ENCODE measurements at regions of chr18 and their contacts with region 1.

Region 1: GRCh38 chr18:79458131-79458838 is 62.6 kb downstream of the NFATC1 start:
- DNase-seq: peak; percentile 89 to 94 (median 90)
- ATAC-seq: peak; percentile 89 to 90
- H3K4me3 ChIP-seq: no peak overlapping the region
- H3K27ac ChIP-seq: peak overlapping the region; percentile 59
- H3K4me1 ChIP-seq: peaks cover 8% of the 10 kb centered on the region
- H3K27me3 ChIP-seq: no peaks in the 10 kb centered on the region

Region 2: DNA sequence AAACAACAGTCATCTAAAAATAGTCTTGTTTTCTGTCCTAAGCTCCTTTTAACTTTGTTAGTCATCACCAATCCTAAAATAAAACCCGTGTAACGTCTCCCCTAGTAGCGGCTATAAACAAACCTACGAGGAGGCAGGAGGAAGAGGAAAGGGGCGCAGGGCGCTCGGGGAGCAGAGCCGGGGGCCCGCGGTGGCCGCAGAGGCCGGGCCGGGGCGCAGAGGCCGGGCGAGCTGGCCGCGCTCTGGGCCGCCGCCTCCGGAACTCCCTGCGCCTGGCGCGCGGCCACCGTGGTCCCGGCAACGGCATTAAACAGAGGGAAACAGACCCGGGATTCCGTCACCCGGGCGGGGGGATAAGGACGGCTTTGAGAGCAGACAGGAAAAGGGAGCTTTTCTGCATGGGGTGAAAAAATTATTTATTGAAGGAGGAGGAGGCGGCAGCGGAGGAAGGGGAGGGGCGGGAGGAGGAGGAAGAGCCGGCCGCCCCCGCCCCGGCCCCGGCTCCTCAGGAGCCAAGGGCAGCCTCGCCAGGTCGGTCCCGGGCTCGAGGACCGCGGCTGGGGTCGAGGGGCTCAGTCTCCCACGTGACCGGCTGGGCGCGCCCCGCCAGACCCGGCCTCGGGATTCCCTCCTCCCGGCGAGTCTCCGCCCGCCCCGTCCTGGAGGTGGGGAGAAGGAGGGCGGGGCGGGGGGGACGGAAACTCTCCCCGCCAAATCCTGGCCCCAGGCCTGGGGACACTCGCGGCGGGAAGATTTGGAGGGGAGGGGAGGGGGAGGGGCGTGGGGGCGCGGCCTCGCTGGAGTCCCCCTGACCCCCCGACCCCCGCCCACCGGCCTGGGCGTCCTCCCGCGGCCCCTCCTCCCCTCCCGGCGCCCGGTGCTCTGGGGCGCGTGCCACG is 64.4 kb before region 1 on chr18:
- intact Hi-C with region 1: loop called in 1 of 4 experiments (anchors 2 kb)
- DNase-seq: peak; percentile 98 to 99 (median 98)
- ATAC-seq: peak; percentile 82
- H3K4me3 ChIP-seq: peak overlapping the region; percentile 60
- H3K27ac ChIP-seq: peak overlapping the region; percentile 96
- H3K4me1 ChIP-seq: peaks cover 4% of the 10 kb centered on the region
- H3K27me3 ChIP-seq: no peaks in the 10 kb centered on the region

Region 3: DNA sequence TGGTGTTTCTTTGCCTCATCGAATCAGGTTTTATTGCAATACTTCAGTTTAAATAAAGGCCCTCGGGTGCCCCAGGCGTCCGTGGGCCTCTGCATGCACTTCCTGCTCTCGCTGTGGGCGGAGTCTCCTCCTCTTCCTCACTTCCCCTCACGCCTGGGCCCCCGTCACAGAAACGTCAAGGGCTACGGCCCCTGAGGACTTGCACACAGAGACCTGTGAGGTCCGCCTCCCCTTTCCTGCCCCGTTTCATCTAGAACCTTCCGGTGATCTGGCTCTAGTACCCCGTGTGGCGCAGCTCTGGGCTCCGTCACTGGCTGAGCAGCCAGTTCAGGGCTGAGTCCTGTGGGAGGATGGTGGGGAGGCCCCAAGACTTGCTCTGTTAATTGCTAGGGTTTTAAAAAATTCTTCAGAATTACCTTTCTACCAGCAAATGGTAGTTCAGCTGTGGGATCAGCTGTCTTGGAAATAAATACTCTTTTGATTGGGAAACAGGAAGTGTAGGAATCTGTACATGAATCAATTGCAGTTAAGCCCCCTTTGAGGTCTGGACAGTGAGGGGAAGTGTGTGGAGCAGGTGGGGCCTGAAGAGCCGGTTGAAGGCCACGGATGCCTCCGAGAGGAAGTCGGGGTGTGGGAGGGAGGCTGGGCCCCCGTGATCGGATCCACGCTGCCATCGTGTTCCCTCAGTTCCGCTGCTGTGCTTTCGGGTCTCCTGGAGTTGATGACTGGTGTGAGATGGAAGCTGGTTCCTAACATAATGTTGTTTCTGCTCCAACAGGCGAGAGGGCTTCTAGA is 52.3 kb before region 1 on chr18:
- intact Hi-C with region 1: loop called in 1 of 4 experiments (anchors 5 kb)
- DNase-seq: peak; percentile 65 to 85 (median 85)
- ATAC-seq: peak in 1 of 2 donors; percentile 36
- H3K4me3 ChIP-seq: no peak overlapping the region
- H3K27ac ChIP-seq: peak overlapping the region; percentile 59
- H3K4me1 ChIP-seq: peaks cover 6% of the 10 kb centered on the region
- H3K27me3 ChIP-seq: no peaks in the 10 kb centered on the region

Region 4: DNA sequence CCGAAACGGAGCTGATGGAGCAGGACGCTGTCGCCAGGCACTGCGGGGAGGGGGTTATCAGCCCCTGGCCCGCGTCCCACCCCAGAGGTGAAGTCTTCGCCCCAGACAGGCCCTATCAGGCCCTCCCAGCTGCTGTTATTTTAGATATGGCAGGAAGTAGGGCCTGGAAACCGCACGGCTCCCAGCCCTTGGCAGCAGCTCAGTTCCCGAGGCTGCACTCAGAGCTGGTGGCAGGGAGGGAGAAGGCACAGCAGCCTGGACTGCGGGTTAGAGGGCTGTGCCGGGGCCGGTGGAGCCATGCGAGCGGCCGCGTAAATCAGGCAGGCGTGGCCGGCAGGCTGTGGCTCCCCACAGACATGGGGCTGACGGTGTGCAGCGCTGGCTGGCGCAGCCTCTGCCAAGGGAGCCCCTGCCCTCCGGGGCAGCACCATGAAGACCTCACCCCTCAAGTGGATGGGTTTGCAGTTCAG is 48.8 kb after region 1 on chr18:
- intact Hi-C with region 1: loop called in 1 of 4 experiments (anchors 5 kb)
- DNase-seq: peak; percentile 90 to 96 (median 95)
- ATAC-seq: peak; percentile 93 to 95
- H3K4me3 ChIP-seq: peak overlapping the region; percentile 1
- H3K27ac ChIP-seq: peak overlapping the region; percentile 78
- H3K4me1 ChIP-seq: peaks cover 6% of the 10 kb centered on the region
- H3K27me3 ChIP-seq: no peaks in the 10 kb centered on the region

Measured in right cardiac atrium (tissue), 5 donors.